AG04449 (cell line): ENCODE measurements at regions of chr7 and their contacts with region 1.

Region 1: DNA sequence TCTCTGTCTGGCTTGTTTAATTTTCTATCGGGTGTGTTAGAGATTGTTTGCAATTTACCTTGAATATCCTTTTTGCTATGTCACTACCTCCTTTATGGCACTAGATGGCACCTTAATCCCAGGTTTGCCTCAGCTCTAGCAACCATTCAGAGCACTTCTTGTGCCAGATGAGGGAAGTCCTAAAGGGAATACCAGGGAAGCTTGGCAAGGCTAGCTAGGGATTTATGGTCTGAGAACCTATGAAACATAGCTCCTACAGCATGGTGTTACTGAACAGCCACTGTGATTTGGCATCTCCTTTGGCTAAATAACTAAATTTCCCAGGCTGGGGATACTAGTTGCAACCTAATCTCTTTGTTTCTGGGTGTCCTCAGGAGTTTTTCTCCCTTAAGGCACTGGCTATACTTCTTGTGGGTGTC is 69.0 kb upstream of the VOPP1 start:
- DNase-seq: peak; percentile 59
- H3K4me3 ChIP-seq: no peak overlapping the region
- CTCF ChIP-seq: peak; percentile 70

Region 2: GRCh38 chr7:55629051-55629677 is 12.1 kb before region 1 on chr7:
- CTCF ChIA-PET with region 1: interaction called, 13 read pairs
- POLR2A ChIA-PET with region 1: no interaction called
- DNase-seq: no peak
- H3K4me3 ChIP-seq: no peak overlapping the region
- CTCF ChIP-seq: no peak

Region 3: DNA sequence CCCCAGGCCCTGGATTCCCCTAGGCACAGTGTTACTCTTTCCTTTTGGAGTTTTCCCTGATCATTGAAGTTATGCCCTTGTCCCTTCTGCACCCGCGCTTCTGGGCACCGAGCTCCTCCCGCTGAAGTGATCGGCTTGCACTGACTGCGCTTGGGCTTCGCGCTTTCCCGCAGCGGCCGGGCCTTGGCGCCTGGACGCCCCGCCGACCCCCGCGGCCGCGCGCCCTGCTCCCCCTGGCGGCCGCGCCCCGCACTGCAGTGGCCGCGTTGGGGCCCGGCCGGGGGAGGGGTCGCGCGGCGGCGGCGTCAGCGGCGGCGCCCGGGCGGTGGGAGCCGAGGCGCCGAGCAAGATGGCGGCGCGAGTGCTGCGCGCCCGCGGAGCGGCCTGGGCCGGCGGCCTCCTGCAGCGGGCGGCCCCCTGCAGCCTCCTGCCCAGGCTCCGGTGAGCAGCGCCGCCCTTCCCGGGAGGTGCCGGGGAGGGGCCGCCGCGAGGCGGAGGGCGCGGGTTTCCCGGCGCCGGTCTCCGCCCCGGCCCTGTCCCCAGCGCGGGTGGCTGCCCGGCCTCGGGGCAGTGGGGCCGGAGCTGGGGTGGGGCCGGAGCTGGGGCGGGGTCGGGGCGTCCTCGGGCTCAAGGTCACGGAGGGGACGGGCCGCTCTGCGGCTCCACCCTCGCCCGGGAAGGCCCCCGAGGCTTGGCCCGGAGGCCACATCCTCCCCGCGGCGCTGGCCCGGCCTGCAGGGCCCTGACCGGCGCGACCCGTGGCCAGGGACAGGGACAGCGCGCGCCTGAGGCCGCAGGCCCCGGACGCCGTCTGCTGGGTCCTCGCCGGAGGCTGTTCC is 323.2 kb after region 1 on chr7 and contains the start of gene NIPSNAP2:
- CTCF ChIA-PET with region 1: interaction called, 56 read pairs
- POLR2A ChIA-PET with region 1: no interaction called
- DNase-seq: no peak
- H3K4me3 ChIP-seq: peak within 1 kb of the TSS; percentile 69
- CTCF ChIP-seq: peak; percentile 26

Region 4: DNA sequence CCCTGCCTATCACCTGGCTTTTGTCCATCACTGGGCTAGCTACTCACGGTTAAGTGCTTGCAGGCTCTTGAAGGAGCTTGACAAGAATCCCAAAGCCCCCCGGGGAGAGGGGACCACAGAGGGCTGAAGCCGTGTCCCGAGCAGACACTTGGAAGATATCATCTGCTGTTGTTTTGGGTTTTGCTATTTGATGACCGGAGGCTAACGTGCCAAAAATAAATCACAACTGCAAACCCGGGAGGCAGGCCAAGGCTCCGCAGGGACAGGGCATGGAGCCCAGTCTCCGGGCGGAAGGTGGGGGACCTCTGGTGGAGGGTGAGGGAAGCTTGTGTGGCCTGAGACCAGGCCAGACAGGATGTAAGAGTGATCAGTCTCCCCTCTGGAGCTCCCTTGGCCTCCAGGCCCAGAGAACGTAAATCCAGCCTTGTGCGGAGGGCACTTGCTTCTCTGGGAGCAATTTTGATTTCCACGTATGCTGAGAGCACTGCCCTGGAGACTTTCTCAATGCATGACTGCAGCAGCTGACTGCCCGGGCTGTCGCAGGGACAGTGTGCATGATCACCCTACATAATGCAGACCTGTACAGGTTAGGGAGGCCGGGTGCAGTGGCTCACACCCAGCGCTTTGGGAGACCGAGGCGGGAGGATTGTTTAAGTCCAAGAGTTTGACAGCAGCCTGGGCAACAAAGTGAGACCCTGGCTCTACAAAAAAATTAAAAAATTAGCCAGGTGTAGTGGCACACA is 451.7 kb after region 1 on chr7 and contains the start of gene PHKG1:
- CTCF ChIA-PET with region 1: interaction called, 21 read pairs
- POLR2A ChIA-PET with region 1: no interaction called
- DNase-seq: peak; percentile 44
- H3K4me3 ChIP-seq: no peak within 1 kb of the TSS
- CTCF ChIP-seq: peak; percentile 29